Psoas muscle (tissue), 8 donors: ENCODE measurements at regions of chr12 and their contacts with region 1.

Region 1: DNA sequence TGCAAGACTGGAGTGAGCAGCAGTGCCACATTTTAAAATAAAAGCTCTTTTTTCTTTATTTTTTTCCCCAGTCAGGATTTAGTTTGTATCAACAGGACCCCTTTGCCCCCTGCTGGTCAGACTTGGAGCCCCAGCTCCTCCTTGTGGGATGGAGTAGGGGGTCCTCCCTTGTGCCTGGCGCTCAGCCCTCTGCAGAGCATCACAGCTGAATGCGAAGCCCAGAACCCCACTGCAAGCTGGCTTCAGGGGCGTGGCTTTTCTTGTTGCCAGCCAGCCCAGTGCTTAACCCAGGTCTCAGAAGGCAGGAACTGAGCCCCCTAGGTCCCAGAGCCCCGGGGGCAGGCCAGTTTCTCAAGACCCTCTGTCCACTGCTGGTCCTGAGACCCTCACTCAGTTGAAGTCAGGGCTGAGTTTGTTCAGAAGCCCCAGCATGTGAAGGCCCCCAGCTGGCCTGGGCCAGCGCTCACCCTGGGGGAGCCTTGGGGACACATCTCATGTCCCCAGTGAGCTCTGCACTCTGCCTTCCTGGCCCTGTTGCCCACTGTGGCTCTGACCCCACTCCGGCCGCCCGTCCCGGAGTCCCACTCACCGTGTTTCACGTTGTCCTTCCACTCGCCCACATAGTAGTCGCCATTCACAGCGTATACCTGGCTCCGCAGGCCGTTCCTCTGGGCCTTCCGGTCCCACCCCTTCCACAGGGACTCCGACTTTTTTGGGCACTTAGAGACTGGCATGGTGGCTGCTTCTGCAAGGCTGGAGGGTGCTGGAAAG is 519 bp downstream of the MORN3 start:
- DNase-seq: peak; percentile 36 to 64
- ATAC-seq: no peak
- H3K4me3 ChIP-seq: no peak overlapping the region
- H3K27ac ChIP-seq: no peak overlapping the region
- H3K4me1 ChIP-seq: peaks cover 4% of the 10 kb centered on the region
- H3K27me3 ChIP-seq: no peaks in the 10 kb centered on the region
- CTCF ChIP-seq: peak; percentile 55

Region 2: GRCh38 chr12:121499929-121500793 is 168.8 kb before region 1 on chr12:
- intact Hi-C with region 1: no loop called
- DNase-seq: peak; percentile 81 to 87
- ATAC-seq: peak; percentile 86 to 92 (median 90)
- H3K4me3 ChIP-seq: peak overlapping the region; percentile 54
- H3K27ac ChIP-seq: peak overlapping the region; percentile 70
- H3K4me1 ChIP-seq: peaks cover 13% of the 10 kb centered on the region
- H3K27me3 ChIP-seq: no peaks in the 10 kb centered on the region
- CTCF ChIP-seq: peak; percentile 99

Region 3: DNA sequence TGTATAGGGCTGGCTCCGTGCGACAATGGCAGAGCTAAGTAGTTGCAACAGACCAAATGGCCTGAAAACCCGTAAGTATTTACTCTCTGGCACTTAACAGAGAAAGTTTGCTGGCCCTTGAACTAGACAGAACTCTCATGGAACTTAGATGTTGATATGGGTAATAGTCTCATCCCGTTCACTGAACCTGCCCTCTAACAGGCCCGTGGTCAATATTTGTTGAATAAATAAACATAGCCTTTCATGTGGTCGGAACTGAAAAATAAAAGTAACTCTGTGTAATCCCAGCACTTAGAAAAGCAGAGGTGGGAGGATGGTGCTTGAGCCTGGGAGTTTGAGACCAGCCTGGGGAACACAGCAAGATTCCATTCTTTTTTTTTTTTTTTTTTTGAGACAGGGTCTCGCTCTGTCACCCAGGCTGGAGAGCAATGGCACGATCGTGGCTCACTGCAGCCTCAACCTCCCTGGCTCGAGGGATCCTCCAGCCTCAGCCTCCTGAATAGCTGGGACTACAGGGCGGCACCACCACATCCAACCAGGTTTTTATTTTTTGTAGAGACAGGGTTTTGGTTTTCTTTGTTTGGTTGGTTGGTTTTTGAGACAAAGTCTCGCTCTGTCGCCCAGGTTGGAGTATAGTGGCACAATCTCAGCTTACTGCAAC is 117.8 kb before region 1 on chr12:
- intact Hi-C with region 1: loop called in 1 of 2 experiments (anchors 5 kb)
- DNase-seq: no peak
- ATAC-seq: no peak
- H3K4me3 ChIP-seq: no peak overlapping the region
- H3K27ac ChIP-seq: no peak overlapping the region
- H3K4me1 ChIP-seq: no peaks in the 10 kb centered on the region
- H3K27me3 ChIP-seq: no peaks in the 10 kb centered on the region
- CTCF ChIP-seq: no peak